Activated naive CD4-positive, alpha-beta T cell treated with anti-CD3 and anti-CD28 coated beads for 36 hours (primary cell): ENCODE measurements at regions of chr7 and their contacts with region 1.

Region 1: DNA sequence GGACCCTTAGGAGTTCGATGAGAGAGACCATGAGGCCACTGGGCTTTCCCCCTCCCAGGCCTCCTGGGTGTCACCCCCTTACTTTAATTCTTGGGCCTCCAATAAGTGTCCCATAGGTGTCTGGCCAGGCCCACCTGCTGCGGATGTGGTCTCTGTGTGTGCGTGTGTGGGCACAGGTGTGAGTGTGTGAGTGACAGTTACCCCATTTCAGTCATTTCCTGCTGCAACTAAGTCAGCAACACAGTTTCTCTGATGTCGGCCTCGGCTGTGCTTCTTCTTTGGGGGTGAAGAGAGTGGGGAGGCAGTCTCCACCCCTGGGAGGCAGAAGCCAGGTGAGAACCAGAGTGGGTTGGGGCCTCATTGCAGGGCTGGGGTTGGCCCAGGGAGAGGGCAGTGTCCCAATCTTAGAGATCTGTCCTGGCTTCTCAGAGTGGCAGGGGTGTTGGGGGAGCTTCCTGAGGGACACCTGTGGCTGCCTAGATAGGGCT is 1.5 kb downstream of the PVRIG start:
- DNase-seq: peak; percentile 93
- H3K4me3 Mint-ChIP-seq: peak overlapping the region; percentile 97
- H3K27ac Mint-ChIP-seq: peak overlapping the region; percentile 98
- H3K4me1 Mint-ChIP-seq: peaks cover 57% of the 10 kb centered on the region
- H3K27me3 Mint-ChIP-seq: no peaks in the 10 kb centered on the region

Region 2: GRCh38 chr7:99438573-99439480 is 782.4 kb before region 1 on chr7 and contains the starts of genes CPSF4 and PTCD1:
- CTCF ChIA-PET with region 1: no interaction called
- intact Hi-C with region 1: no loop called
- DNase-seq: peak; percentile 95
- H3K4me3 Mint-ChIP-seq: peak within 1 kb of the TSS; percentile 98
- H3K27ac Mint-ChIP-seq: peak within 1 kb of the TSS; percentile 94
- H3K4me1 Mint-ChIP-seq: peaks cover 43% of the 10 kb centered on the region
- H3K27me3 Mint-ChIP-seq: no peaks in the 10 kb centered on the region
- total RNA-seq, gene CPSF4: 70.6 to 73.5 TPM
- total RNA-seq, gene PTCD1: 3.5 to 5.1 TPM

Region 3: DNA sequence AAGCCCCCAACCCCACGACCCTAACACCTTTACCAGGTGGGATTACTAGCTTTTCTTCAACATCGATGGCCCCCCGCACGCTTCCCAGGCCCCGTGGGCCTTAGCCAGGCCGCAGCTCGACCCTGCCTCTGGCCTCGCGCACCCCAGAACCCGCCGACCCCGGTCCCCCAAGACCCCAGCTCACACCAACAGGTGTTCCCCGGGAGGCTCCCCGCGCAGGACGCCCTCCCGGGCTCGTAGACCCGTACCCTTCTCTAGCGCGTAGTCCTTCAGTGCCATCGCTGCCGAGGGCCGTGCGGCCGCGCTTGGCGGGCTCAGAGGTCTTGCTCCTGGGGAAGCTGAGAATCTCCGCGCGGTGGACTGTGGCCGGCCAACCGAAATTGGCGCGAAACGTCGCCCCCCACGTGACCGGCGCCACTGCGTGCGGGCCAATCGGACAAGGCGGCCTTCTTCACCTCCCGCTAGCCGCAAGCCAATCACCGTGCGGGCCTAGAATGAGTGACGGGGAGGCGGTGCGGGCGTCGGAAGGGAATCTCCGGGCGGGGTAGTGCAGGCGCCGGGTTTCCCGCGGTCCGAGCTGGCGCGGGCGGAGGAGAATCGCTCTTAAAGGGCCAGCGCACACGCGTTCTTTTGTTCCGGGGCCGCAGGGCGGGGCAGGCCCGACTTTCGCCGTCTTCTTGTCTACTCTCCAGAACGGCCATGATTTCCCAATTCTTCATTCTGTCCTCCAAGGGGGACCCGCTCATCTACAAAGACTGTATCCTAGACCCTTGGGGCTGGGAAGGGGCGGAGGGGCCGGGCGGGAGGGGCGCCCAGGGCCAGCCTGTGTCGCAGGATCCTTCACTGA is 120.0 kb before region 1 on chr7 and contains the starts of genes AP4M1 and MCM7:
- CTCF ChIA-PET with region 1: no interaction called
- intact Hi-C with region 1: loop called (anchors 1 kb)
- DNase-seq: peak; percentile 98
- H3K4me3 Mint-ChIP-seq: peak within 1 kb of the TSS; percentile 91
- H3K27ac Mint-ChIP-seq: peak within 1 kb of the TSS; percentile 96
- H3K4me1 Mint-ChIP-seq: peaks cover 40% of the 10 kb centered on the region
- H3K27me3 Mint-ChIP-seq: no peaks in the 10 kb centered on the region
- total RNA-seq, gene AP4M1: 12.6 to 12.7 TPM
- total RNA-seq, gene MCM7: 390 to 395 TPM

Region 4: GRCh38 chr7:100148559-100149350 is 72.5 kb before region 1 on chr7 and contains the start of gene LAMTOR4:
- CTCF ChIA-PET with region 1: interaction called, 3 read pairs
- intact Hi-C with region 1: loop called (anchors 1 kb)
- DNase-seq: peak; percentile 100
- H3K4me3 Mint-ChIP-seq: peak within 1 kb of the TSS; percentile 100
- H3K27ac Mint-ChIP-seq: peak within 1 kb of the TSS; percentile 99
- H3K4me1 Mint-ChIP-seq: peaks cover 29% of the 10 kb centered on the region
- H3K27me3 Mint-ChIP-seq: no peaks in the 10 kb centered on the region
- total RNA-seq, gene LAMTOR4: 129 to 135 TPM

Region 5: GRCh38 chr7:100177045-100178001 is 44.0 kb before region 1 on chr7 and contains the starts of genes GPC2 and STAG3:
- CTCF ChIA-PET with region 1: interaction called, 10 read pairs
- intact Hi-C with region 1: no loop called
- DNase-seq: peak; percentile 99
- H3K4me3 Mint-ChIP-seq: peak within 1 kb of the TSS; percentile 80
- H3K27ac Mint-ChIP-seq: peak within 1 kb of the TSS; percentile 30
- H3K4me1 Mint-ChIP-seq: peaks cover 43% of the 10 kb centered on the region
- H3K27me3 Mint-ChIP-seq: no peaks in the 10 kb centered on the region
- total RNA-seq, gene GPC2: 7.6 to 9.5 TPM
- total RNA-seq, gene STAG3: 38.4 to 41.0 TPM

Region 6: DNA sequence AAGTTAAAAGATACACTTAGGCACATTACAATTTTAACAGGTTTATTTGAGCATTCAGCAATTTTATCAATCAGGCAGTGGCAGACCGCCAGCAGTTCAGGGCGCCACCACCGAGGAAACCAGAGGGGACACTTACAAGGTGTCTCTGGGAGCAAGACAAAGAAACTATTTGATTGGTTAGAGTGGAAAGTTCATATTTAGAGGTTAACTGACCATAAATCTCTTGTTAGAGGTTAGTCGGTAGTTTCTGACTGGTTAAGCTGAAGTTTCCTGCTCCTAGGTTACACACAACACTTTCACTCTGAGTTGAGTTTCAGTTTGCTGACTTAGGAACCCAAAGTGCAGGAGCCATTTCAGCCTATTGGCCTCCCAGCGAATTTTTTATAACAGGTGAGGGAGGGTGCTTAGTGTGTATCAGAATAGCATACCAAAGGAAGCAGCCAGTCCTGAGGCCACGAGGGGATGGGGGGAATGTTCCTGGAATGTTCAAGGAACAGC is 12.3 kb before region 1 on chr7:
- CTCF ChIA-PET with region 1: interaction called, 23 read pairs
- intact Hi-C with region 1: loop called (anchors 1 kb)
- DNase-seq: peak; percentile 78
- H3K4me3 Mint-ChIP-seq: peak overlapping the region; percentile 68
- H3K27ac Mint-ChIP-seq: peak overlapping the region; percentile 92
- H3K4me1 Mint-ChIP-seq: peaks cover 52% of the 10 kb centered on the region
- H3K27me3 Mint-ChIP-seq: no peaks in the 10 kb centered on the region

Region 7: GRCh38 chr7:100271716-100272537 is 50.7 kb after region 1 on chr7:
- CTCF ChIA-PET with region 1: no interaction called
- intact Hi-C with region 1: loop called (anchors 5 kb)
- DNase-seq: peak; percentile 98
- H3K4me3 Mint-ChIP-seq: peak overlapping the region; percentile 70
- H3K27ac Mint-ChIP-seq: no peak overlapping the region
- H3K4me1 Mint-ChIP-seq: peaks cover 11% of the 10 kb centered on the region
- H3K27me3 Mint-ChIP-seq: no peaks in the 10 kb centered on the region

Region 8: GRCh38 chr7:100396421-100396982 is 175.2 kb after region 1 on chr7:
- CTCF ChIA-PET with region 1: no interaction called
- intact Hi-C with region 1: loop called (anchors 1 kb)
- DNase-seq: peak; percentile 85
- H3K4me3 Mint-ChIP-seq: no peak overlapping the region
- H3K27ac Mint-ChIP-seq: no peak overlapping the region
- H3K4me1 Mint-ChIP-seq: peaks cover 28% of the 10 kb centered on the region
- H3K27me3 Mint-ChIP-seq: peaks cover 19% of the 10 kb centered on the region